Thyroid gland (tissue), 4 donors: ENCODE measurements at regions of chr12 and their contacts with region 1.

Region 1: GRCh38 chr12:95998611-95999286 is 2.6 kb upstream of the HAL start:
- DNase-seq: peak; percentile 36 to 45
- H3K4me3 ChIP-seq: no peak overlapping the region
- H3K27ac ChIP-seq: no peak overlapping the region
- H3K4me1 ChIP-seq: no peaks in the 10 kb centered on the region
- H3K27me3 ChIP-seq: no peaks in the 10 kb centered on the region
- CTCF ChIP-seq: peak in 5 of 6 experiments; percentile 36 to 76 (median 65)
- POLR2A ChIP-seq: no peak

Region 2: DNA sequence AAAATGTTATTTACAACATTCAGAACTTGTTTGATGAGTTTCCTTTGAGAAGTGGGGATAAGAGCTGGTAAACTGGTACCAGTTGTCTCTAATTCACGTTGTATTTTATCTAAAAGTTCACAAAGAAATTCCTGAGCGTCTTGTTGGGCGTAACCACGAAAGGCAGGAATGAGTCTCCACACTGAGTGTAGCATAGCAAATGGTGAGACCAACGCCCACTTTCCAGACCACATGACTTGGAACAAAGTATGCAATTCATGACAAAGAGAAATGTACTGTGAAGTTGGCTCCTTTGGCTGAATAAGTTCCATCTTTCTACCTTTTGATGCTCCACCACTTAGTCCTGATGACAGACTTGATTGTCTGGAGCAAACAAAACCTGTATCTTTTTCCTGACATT is 465.9 kb before region 1 on chr12:
- intact Hi-C with region 1: no loop called
- DNase-seq: no peak
- H3K4me3 ChIP-seq: no peak overlapping the region
- H3K27ac ChIP-seq: no peak overlapping the region
- H3K4me1 ChIP-seq: peaks cover 5 to 9% of the 10 kb centered on the region in 2 donors
- H3K27me3 ChIP-seq: no peaks in the 10 kb centered on the region
- CTCF ChIP-seq: no peak
- POLR2A ChIP-seq: no peak

Region 3: DNA sequence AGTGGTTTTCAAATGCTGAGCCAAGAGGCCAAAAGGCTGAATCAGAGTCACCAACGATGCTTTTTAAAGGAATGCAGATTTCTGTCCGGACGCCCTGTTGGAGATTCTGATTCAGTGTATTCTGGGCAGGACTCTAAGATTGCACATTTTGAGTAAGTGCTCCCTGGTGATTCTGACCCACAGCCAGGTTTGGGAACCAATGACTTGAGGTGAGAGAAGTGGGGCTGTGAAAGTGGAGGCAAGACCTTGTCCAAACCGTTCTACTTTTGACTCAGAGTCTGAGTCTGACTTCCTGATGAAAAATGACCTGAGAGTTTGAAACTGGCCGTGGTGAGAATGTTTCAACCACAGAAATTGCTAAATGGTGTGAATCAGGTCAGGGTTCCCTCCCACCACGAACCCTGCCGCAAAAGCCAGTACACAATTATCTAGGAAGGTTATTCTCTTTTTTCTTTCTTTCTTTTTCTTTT is 298.4 kb before region 1 on chr12:
- intact Hi-C with region 1: no loop called
- DNase-seq: no peak
- H3K4me3 ChIP-seq: no peak overlapping the region
- H3K27ac ChIP-seq: no peak overlapping the region
- H3K4me1 ChIP-seq: peaks cover 0 to 5% of the 10 kb centered on the region in 2 donors
- H3K27me3 ChIP-seq: no peaks in the 10 kb centered on the region
- CTCF ChIP-seq: no peak
- POLR2A ChIP-seq: no peak

Region 4: DNA sequence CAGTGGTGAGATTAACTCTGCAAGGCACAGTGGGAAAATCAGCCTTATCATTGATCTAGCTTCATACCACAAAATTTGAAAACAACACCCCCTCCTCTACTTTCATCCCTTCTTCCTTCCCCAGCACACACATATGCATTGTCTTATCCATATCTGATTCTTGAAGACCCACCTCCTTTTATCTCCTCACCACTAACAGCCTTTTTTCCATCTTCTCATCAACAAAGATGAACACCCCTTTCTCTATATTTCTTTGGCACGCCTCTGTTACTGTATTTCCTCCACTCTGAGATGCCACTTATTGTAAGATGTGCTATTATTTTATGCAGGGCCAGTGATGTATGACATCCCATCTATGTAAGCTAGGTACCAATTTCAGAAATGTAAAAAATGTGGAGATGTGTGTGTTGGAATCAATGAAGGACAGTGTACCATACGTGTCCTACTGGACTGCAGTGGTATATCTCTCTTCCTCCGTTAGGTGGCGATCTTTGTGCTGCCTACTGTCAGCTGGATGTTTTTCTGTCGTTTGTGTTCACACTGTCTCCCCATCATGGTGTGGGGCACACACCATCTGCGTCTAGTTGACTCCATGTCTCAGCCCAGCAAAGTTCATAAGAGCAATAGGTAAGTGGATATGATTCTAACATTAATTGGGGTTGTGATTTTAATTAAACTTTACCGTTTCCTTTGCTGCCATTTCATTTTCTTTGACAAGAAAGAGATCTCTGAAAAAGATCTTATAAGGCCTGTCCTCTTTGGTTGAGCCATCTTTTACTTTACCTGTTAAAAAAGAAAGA is 80.4 kb before region 1 on chr12:
- intact Hi-C with region 1: loop called (anchors 10 kb)
- DNase-seq: peak; percentile 11 to 12
- H3K4me3 ChIP-seq: no peak overlapping the region
- H3K27ac ChIP-seq: no peak overlapping the region
- H3K4me1 ChIP-seq: no peaks in the 10 kb centered on the region
- H3K27me3 ChIP-seq: no peaks in the 10 kb centered on the region
- CTCF ChIP-seq: peak; percentile 35 to 71 (median 63)
- POLR2A ChIP-seq: no peak